ENCODE measurements at regions of chr1 and their contacts with region 1.

Region 1: GRCh38 chr1:27830621-27831424 is at the start of gene PPP1R8:
- DNase-seq: peak; percentile 73 to 96 (median 86)
- ATAC-seq: peak; percentile 99
- H3K4me3 ChIP-seq: peak within 1 kb of the TSS; percentile 93
- H3K4me3 Mint-ChIP-seq: peak within 1 kb of the TSS; percentile 96
- H3K27ac ChIP-seq: peak within 1 kb of the TSS; percentile 64 to 74
- H3K27ac Mint-ChIP-seq: peak within 1 kb of the TSS; percentile 93
- H3K4me1 ChIP-seq: peaks cover 27% of the 10 kb centered on the region
- H3K4me1 Mint-ChIP-seq: peaks cover 46% of the 10 kb centered on the region
- H3K27me3 ChIP-seq: no peaks in the 10 kb centered on the region
- H3K27me3 Mint-ChIP-seq: no peaks in the 10 kb centered on the region
- CTCF ChIP-seq: no peak
- total RNA-seq, gene PPP1R8: 14.8 to 15.7 TPM

Region 2: DNA sequence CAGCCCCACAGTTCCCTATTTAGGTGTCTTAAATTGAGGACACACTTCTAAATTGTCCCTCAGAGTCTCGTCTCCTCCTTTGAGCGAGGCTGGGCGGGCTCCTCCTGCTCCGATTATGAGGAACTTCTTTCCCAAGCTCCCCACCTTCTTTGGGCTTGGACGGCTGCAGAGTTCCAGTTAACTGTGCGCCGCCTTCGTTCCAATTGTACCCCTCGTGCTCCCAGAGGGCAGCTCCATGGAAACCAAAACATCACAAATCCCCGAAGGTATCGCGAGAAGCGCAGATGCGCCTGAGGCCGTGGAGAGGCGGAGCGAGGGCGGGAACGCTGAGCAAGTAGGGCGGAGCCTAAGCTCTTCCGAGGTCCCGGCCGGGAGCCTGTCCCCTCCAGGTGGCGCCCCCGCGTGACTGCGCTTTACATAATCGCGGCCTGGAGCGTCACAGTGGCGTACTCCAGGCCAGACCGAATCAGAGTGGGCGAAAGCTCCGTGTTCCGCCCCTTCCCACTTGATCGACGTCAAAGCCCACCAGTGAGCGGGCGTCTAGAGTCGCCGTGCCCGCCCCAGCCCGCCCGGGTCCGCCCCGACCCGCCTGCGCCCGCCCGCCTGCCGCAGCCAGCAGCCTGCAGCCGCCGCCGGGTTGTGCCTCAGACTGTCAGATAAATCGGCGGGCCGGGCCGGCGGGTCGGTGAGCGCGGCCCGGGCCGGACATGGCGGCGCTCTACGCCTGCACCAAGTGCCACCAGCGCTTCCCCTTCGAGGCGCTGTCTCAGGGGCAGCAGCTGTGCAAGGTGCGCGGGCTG is 105.2 kb before region 1 on chr1 and contains the start of gene FAM76A:
- CTCF ChIA-PET with region 1: no interaction called
- POLR2A ChIA-PET with region 1: interaction called, 9 read pairs
- intact Hi-C with region 1: loop called in 1 of 2 experiments (anchors 2 kb)
- DNase-seq: peak; percentile 99 to 100 (median 99)
- ATAC-seq: peak; percentile 92
- H3K4me3 ChIP-seq: peak within 1 kb of the TSS; percentile 74
- H3K4me3 Mint-ChIP-seq: peak within 1 kb of the TSS; percentile 85
- H3K27ac ChIP-seq: peak within 1 kb of the TSS; percentile 82 to 85
- H3K27ac Mint-ChIP-seq: peak within 1 kb of the TSS; percentile 89
- H3K4me1 ChIP-seq: peaks cover 19% of the 10 kb centered on the region
- H3K4me1 Mint-ChIP-seq: peaks cover 24% of the 10 kb centered on the region
- H3K27me3 ChIP-seq: no peaks in the 10 kb centered on the region
- H3K27me3 Mint-ChIP-seq: no peaks in the 10 kb centered on the region
- CTCF ChIP-seq: peak; percentile 60
- total RNA-seq, gene FAM76A: 26.0 to 28.7 TPM